ENCODE measurements at regions of chr20 and their contacts with region 1.

Region 1: DNA sequence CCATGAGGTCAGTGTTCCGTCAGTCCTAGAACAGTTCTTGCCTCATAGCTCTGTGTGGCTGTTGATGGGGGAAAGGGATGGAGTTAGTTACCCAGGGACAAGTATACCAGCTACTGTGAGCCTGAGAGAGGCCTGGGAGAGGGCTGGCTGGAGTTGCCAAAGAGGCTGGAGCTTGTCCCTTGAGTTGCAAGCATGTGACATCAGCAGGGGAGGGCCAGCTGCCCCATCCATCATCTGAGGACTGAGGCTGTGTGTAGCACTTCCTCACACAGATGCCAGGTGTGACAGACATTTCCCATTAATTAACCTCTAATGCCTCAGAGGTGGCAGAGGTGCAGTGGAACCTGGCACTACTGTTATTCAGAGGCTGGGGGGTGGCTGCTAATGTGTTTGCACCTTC is 131.6 kb downstream of the PHACTR3 start:
- DNase-seq: no peak
- H3K4me3 ChIP-seq: no peak overlapping the region
- H3K27ac ChIP-seq: no peak overlapping the region
- H3K4me1 ChIP-seq: no peaks in the 10 kb centered on the region
- H3K27me3 ChIP-seq: no peaks in the 10 kb centered on the region
- CTCF ChIP-seq: no peak
- EP300 ChIP-seq: no peak
- POLR2A ChIP-seq: no peak

Region 2: GRCh38 chr20:59650446-59650845 is 85.5 kb before region 1 on chr20:
- in situ Hi-C with region 1: no loop called
- intact Hi-C with region 1: no loop called
- DNase-seq: no peak
- H3K4me3 ChIP-seq: no peak overlapping the region
- H3K27ac ChIP-seq: no peak overlapping the region
- H3K4me1 ChIP-seq: no peaks in the 10 kb centered on the region
- H3K27me3 ChIP-seq: peaks cover 2% of the 10 kb centered on the region
- CTCF ChIP-seq: no peak
- EP300 ChIP-seq: no peak
- POLR2A ChIP-seq: no peak

Region 3: DNA sequence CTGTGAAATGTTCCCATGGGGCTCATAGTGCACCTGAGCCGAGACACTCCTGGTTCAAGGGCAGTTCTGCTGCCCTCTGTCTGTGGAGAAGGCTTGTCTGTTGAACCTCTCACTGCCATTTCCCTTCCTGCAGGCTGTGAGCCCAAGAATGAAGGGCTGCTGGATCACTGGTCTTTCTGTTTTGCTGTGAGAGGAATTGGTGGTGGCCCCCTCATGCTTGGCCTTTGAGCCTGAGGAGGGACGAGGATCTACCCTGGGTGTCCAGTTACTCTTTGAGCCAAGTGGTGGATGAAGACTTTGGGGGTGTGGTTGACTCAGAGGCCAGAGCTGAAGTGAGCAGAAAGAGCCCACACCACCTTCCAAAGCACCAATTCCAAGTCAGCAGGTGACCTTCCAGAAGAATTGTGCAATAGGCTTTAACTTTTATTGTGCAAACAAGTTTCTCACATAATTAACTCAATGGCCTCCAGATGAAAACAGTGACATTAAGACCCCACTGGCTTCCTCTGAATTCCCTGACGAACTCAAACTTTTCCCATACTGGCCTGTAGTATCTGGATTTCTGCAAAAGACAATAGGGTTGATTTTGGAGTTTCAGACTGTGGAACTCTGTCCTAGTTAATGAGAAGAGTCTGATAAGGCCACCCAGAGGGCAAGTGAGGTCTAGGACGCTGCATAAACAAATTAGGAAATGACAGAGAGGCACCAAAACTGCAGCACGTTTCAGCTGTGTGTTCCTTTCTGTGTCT is 30.1 kb before region 1 on chr20:
- in situ Hi-C with region 1: no loop called
- intact Hi-C with region 1: loop called (anchors 1 kb)
- DNase-seq: no peak
- H3K4me3 ChIP-seq: no peak overlapping the region
- H3K27ac ChIP-seq: no peak overlapping the region
- H3K4me1 ChIP-seq: no peaks in the 10 kb centered on the region
- H3K27me3 ChIP-seq: no peaks in the 10 kb centered on the region
- CTCF ChIP-seq: no peak
- EP300 ChIP-seq: no peak
- POLR2A ChIP-seq: no peak

Measured in transverse colon (tissue), 4 donors.